Activated T-helper 1 cell treated with anti-CD3 and anti-CD28 coated beads, Interleukin-12 subunit alpha, Interleukin-12 subunit beta, Interleukin-2, Interleukin-4 antibody, amounts not matched to agents 30 ng/mL and 10 ng/mL and 1 ng/mL, durations not matched to agents 14 hours and 24 hours and 36 hours (primary cell): ENCODE measurements at regions of chr12 and their contacts with region 1.

Region 1: GRCh38 chr12:44847888-44848702 is 28.0 kb downstream of the NELL2 start:
- DNase-seq: peak; percentile 65
- H3K4me3 Mint-ChIP-seq: peak overlapping the region; percentile 63
- H3K27ac Mint-ChIP-seq: peak overlapping the region; percentile 94
- H3K4me1 Mint-ChIP-seq: peaks cover 80% of the 10 kb centered on the region
- H3K27me3 Mint-ChIP-seq: no peaks in the 10 kb centered on the region

Region 2: GRCh38 chr12:43758728-43759563 is 1089.1 kb before region 1 on chr12 and contains the starts of genes IRAK4 and PUS7L:
- intact Hi-C with region 1: loop called (anchors 10 kb)
- DNase-seq: peak; percentile 91
- H3K4me3 Mint-ChIP-seq: peak within 1 kb of the TSS; percentile 98
- H3K27ac Mint-ChIP-seq: peak within 1 kb of the TSS; percentile 98
- H3K4me1 Mint-ChIP-seq: peaks cover 68% of the 10 kb centered on the region
- H3K27me3 Mint-ChIP-seq: no peaks in the 10 kb centered on the region
- total RNA-seq, gene IRAK4: 21.4 and 22.5 TPM in 2 replicates
- total RNA-seq, gene PUS7L: 23.1 and 25.4 TPM in 2 replicates

Region 3: GRCh38 chr12:44827832-44828438 is 20.2 kb before region 1 on chr12:
- intact Hi-C with region 1: loop called (anchors 1 kb)
- DNase-seq: no peak
- H3K4me3 Mint-ChIP-seq: peak overlapping the region; percentile 61
- H3K27ac Mint-ChIP-seq: peak overlapping the region; percentile 75
- H3K4me1 Mint-ChIP-seq: peaks cover 36% of the 10 kb centered on the region
- H3K27me3 Mint-ChIP-seq: no peaks in the 10 kb centered on the region

Region 4: DNA sequence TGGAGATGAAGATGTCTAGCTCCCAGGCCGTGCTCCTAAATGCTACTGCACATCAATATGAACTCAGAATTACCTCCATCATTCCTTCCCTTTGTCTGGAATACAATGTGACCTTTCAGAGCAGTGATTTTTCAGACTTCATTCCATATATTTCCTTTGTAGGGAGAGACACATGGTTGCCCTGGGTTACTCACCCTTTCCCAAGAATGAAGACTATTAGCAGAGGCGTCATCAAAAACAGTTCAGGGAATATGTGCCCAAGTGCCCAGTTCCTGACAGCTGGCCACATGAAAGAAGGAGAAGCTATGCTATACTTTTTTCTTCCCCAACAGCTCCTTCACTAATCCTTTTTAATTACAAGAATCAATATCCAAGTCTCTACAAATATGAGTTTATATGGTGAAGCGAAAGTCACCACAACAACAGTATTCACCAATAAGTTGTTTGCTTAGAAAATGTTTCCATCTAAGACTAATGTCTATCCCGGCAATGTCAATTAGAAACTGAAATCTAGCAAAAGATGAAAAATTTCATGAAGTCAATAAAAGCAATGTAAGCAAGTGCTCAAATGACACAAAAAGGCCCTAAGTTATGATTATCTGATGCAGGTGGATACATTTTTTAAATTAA is 10.2 kb after region 1 on chr12:
- intact Hi-C with region 1: loop called (anchors 1 kb)
- DNase-seq: no peak
- H3K4me3 Mint-ChIP-seq: no peak overlapping the region
- H3K27ac Mint-ChIP-seq: peak overlapping the region; percentile 64
- H3K4me1 Mint-ChIP-seq: peaks cover 56% of the 10 kb centered on the region
- H3K27me3 Mint-ChIP-seq: no peaks in the 10 kb centered on the region

Region 5: GRCh38 chr12:44904321-44904720 is 56.2 kb after region 1 on chr12:
- intact Hi-C with region 1: no loop called
- DNase-seq: no peak
- H3K4me3 Mint-ChIP-seq: no peak overlapping the region
- H3K27ac Mint-ChIP-seq: no peak overlapping the region
- H3K4me1 Mint-ChIP-seq: no peaks in the 10 kb centered on the region
- H3K27me3 Mint-ChIP-seq: no peaks in the 10 kb centered on the region

Region 6: GRCh38 chr12:45215419-45216229 is 367.5 kb after region 1 on chr12 and contains the start of gene ANO6:
- intact Hi-C with region 1: loop called (anchors 10 kb)
- DNase-seq: peak; percentile 78
- H3K4me3 Mint-ChIP-seq: peak within 1 kb of the TSS; percentile 92
- H3K27ac Mint-ChIP-seq: peak within 1 kb of the TSS; percentile 95
- H3K4me1 Mint-ChIP-seq: peaks cover 43% of the 10 kb centered on the region
- H3K27me3 Mint-ChIP-seq: peaks cover 1% of the 10 kb centered on the region
- total RNA-seq, gene ANO6: 21.7 and 22.1 TPM in 2 replicates